Aorta (tissue), 5 donors: ENCODE measurements at regions of chr3 and their contacts with region 1.

Region 1: GRCh38 chr3:17639765-17640164 is 102.7 kb downstream of the TBC1D5 start:
- DNase-seq: no peak
- ATAC-seq: no peak
- H3K4me3 ChIP-seq: no peak overlapping the region
- H3K27ac ChIP-seq: peak overlapping the region; percentile 36 to 43
- H3K4me1 ChIP-seq: peaks cover 0 to 2% of the 10 kb centered on the region in 2 donors
- H3K27me3 ChIP-seq: no peaks in the 10 kb centered on the region

Region 2: GRCh38 chr3:17742108-17742879 is 102.5 kb after region 1 on chr3 and contains the start of gene TBC1D5:
- intact Hi-C with region 1: loop called (anchors 5 kb)
- DNase-seq: peak; percentile 98
- ATAC-seq: peak; percentile 99
- H3K4me3 ChIP-seq: peak within 1 kb of the TSS; percentile 39 to 92
- H3K27ac ChIP-seq: peak within 1 kb of the TSS; percentile 77 to 91
- H3K4me1 ChIP-seq: no peaks in the 10 kb centered on the region
- H3K27me3 ChIP-seq: no peaks in the 10 kb centered on the region
- total RNA-seq, gene TBC1D5: 52.2 to 75.5 TPM